H1 (cell line): ENCODE measurements at regions of chr10 and their contacts with region 1.

Region 1: GRCh38 chr10:13440185-13441061 is 88.4 kb downstream of the BEND7 start:
- DNase-seq: peak in 1 of 2 experiments; percentile 91
- H3K4me3 ChIP-seq: peak overlapping the region; percentile 33 to 61 (median 54); a peak in 7 of 8 replicates
- H3K27ac ChIP-seq: no peak overlapping the region
- H3K4me1 ChIP-seq: peaks cover 4 to 7% (median 5%) of the 10 kb centered on the region in 4 experiments; a peak in 6 of 7 replicates
- H3K27me3 ChIP-seq: peaks cover 7 to 23% (median 19%) of the 10 kb centered on the region in 4 experiments
- CTCF ChIP-seq: peak; percentile 85 to 90 (median 89)
- EP300 ChIP-seq: no peak
- POLR2A ChIP-seq: no peak
- RAD21 ChIP-seq: peak; percentile 69 to 81

Region 2: GRCh38 chr10:12960334-12960898 is 480.0 kb before region 1 on chr10:
- CTCF ChIA-PET with region 1: no interaction called
- POLR2A ChIA-PET with region 1: no interaction called
- DNase-seq: no peak
- H3K4me3 ChIP-seq: no peak overlapping the region
- H3K27ac ChIP-seq: no peak overlapping the region
- H3K4me1 ChIP-seq: no peaks in the 10 kb centered on the region
- H3K27me3 ChIP-seq: no peaks in the 10 kb centered on the region
- CTCF ChIP-seq: no peak
- EP300 ChIP-seq: no peak
- POLR2A ChIP-seq: no peak
- RAD21 ChIP-seq: no peak

Region 3: DNA sequence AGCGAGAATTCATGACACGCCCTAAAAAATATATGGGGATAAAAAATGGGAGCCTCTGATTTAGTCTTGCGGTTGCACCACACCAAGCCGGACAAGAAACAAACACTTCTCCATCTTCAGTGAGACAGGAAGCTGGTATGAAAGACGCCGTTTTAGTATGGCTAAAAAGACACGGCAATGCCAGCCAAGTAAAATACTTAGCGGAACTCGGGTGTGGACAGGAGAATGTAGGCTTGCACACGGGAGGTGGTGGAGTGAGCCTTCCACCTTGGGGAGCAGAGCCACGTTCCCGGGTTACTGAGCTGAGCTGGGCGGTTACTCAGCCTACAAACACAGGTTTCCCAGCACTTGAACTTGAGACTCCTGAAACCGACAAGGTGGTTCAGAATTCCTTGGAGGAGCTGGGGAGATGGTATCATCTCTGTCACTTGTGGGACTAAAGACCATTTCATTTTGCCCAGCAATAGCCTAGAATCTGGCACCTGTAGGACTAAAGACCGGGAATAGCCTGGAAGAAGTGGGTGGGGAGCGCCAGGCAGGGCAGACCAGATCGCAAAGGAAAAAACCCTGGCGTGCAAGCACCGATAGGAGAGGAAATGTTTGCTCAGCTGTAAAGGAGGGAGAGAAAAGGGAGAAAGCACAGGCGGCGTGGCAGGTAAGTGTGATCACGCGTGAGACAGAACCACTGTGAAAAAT is 57.6 kb before region 1 on chr10:
- CTCF ChIA-PET with region 1: interaction called, 14 read pairs
- POLR2A ChIA-PET with region 1: interaction called, 4 read pairs
- DNase-seq: no peak
- H3K4me3 ChIP-seq: peak overlapping the region; percentile 29 to 60 (median 50)
- H3K27ac ChIP-seq: no peak overlapping the region
- H3K4me1 ChIP-seq: peaks cover 0 to 4% (median under 1%) of the 10 kb centered on the region in 4 experiments; a peak in 4 of 7 replicates
- H3K27me3 ChIP-seq: peaks cover 0 to 10% (median 8%) of the 10 kb centered on the region in 4 experiments; a peak in 3 of 7 replicates
- CTCF ChIP-seq: no peak
- EP300 ChIP-seq: no peak
- POLR2A ChIP-seq: no peak
- RAD21 ChIP-seq: no peak

Region 4: GRCh38 chr10:13422566-13423199 is 17.7 kb before region 1 on chr10:
- CTCF ChIA-PET with region 1: interaction called, 132 read pairs
- POLR2A ChIA-PET with region 1: no interaction called
- DNase-seq: no peak
- H3K4me3 ChIP-seq: no peak overlapping the region
- H3K27ac ChIP-seq: no peak overlapping the region
- H3K4me1 ChIP-seq: no peaks in the 10 kb centered on the region
- H3K27me3 ChIP-seq: no peaks in the 10 kb centered on the region
- CTCF ChIP-seq: no peak
- EP300 ChIP-seq: no peak
- POLR2A ChIP-seq: no peak
- RAD21 ChIP-seq: no peak

Region 5: DNA sequence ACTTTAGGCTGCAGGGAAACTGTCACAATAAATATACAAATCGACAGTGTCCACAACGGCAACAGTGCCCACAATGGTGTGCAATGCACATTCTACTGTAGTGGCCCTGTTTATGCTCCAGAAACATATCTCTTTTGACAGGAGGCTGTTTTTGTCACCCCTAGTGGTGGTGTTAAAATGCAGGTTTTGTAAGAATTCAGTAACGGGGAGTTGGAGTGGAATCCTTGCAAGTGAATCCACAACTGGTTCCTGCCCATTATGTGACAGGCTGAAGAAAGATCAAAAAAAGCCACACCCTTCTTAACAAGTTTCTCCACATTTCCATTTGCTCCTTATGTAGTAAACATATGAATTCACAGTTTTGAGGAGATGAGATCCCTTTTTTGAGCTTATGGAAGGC is 29.8 kb after region 1 on chr10:
- CTCF ChIA-PET with region 1: interaction called, 15 read pairs
- POLR2A ChIA-PET with region 1: interaction called, 3 read pairs
- DNase-seq: no peak
- H3K4me3 ChIP-seq: no peak overlapping the region
- H3K27ac ChIP-seq: no peak overlapping the region
- H3K4me1 ChIP-seq: no peaks in the 10 kb centered on the region
- H3K27me3 ChIP-seq: no peaks in the 10 kb centered on the region
- CTCF ChIP-seq: peak in 2 of 3 experiments; percentile 22 to 53; a peak in 2 of 4 replicates
- EP300 ChIP-seq: no peak
- POLR2A ChIP-seq: no peak
- RAD21 ChIP-seq: peak in 1 of 2 experiments; percentile 14; a peak in 1 of 4 replicates

Region 6: DNA sequence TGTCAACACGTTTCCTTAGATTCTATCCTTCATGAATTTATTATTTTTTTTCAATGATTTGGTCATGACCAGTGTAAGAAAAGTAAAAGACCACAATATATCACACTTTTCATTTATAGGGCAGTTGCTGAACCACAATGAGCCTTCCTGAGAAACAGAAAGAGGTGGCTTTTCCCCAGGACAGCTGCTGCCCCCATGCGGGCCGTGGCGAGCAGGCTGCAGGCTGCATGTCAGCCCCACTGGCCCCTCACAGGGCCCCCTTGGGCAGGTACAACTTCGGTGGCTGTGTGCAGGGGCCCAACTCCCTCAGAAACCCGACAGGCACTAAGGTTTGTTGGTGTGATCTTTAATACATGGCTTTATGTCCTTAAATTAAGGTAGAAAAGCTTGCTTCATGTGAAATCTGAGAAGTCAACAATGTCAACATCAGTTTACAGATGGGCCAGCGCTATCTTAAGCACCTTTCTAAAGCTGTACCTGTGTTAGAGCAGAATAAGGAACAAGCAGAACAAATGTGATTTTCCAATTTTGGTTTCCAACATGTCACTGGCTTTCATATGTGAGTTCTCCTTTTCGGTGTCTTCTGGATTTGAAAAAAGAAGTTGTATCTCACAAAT is 77.8 kb after region 1 on chr10:
- CTCF ChIA-PET with region 1: interaction called, 13 read pairs
- POLR2A ChIA-PET with region 1: no interaction called
- DNase-seq: peak in 1 of 2 experiments; percentile 76
- H3K4me3 ChIP-seq: no peak overlapping the region
- H3K27ac ChIP-seq: no peak overlapping the region
- H3K4me1 ChIP-seq: peaks cover 0 to 3% (median 0%) of the 10 kb centered on the region in 4 experiments; a peak in 1 of 7 replicates
- H3K27me3 ChIP-seq: no peaks in the 10 kb centered on the region
- CTCF ChIP-seq: peak; percentile 77 to 83 (median 81)
- EP300 ChIP-seq: no peak
- POLR2A ChIP-seq: no peak
- RAD21 ChIP-seq: peak; percentile 85 to 89